ENCODE measurements at regions of chr3 and their contacts with region 1.

Region 1: GRCh38 chr3:160413613-160414248 is 14.3 kb downstream of the SMC4 start:
- DNase-seq: peak; percentile 60
- ATAC-seq: peak; percentile 89
- H3K4me3 ChIP-seq: no peak overlapping the region
- H3K27ac ChIP-seq: no peak overlapping the region
- H3K4me1 ChIP-seq: no peaks in the 10 kb centered on the region
- H3K27me3 ChIP-seq: no peaks in the 10 kb centered on the region
- CTCF ChIP-seq: peak; percentile 72 to 84 (median 80)
- POLR2A ChIP-seq: no peak
- RAD21 ChIP-seq: peak; percentile 80

Region 2: GRCh38 chr3:159266779-159267178 is 1147.0 kb before region 1 on chr3:
- CTCF ChIA-PET with region 1: no interaction called
- POLR2A ChIA-PET with region 1: no interaction called
- RAD21 ChIA-PET with region 1: no interaction called
- intact Hi-C with region 1: loop called (anchors 5 kb)
- DNase-seq: peak; percentile 26
- ATAC-seq: peak; percentile 70
- H3K4me3 ChIP-seq: no peak overlapping the region
- H3K27ac ChIP-seq: no peak overlapping the region
- H3K4me1 ChIP-seq: no peaks in the 10 kb centered on the region
- H3K27me3 ChIP-seq: 0 out of 2 replicates have a peak, but pooled peaks cover 6% of the 10 kb centered on the region
- CTCF ChIP-seq: peak; percentile 31 to 62 (median 42); a peak in 5 of 6 replicates
- POLR2A ChIP-seq: no peak
- RAD21 ChIP-seq: peak; percentile 58

Region 3: DNA sequence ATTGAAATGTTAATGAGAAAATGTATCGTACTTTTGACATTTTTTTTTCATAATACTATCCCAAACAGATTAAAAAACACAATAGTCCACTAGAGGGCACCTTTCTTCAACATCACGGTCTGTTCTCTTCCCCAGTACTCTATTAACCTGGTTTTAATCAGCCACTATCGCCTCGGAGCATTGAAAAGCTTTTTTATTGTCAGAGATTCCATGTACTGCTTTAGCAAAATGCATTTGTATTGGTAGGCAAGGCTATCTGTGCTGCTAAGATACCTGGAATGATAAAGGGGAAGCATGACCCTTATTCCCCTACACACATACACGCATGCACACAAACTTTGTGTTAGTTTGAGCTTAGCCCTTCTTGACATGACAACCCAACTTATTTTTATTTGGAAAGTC is 585.2 kb before region 1 on chr3:
- CTCF ChIA-PET with region 1: no interaction called
- POLR2A ChIA-PET with region 1: no interaction called
- RAD21 ChIA-PET with region 1: no interaction called
- intact Hi-C with region 1: loop called (anchors 5 kb)
- DNase-seq: peak; percentile 35
- ATAC-seq: peak; percentile 74
- H3K4me3 ChIP-seq: no peak overlapping the region
- H3K27ac ChIP-seq: no peak overlapping the region
- H3K4me1 ChIP-seq: peaks cover 30 to 39% of the 10 kb centered on the region in 2 experiments
- H3K27me3 ChIP-seq: no peaks in the 10 kb centered on the region
- CTCF ChIP-seq: peak; percentile 36 to 68 (median 55); a peak in 4 of 6 replicates
- POLR2A ChIP-seq: no peak
- RAD21 ChIP-seq: peak; percentile 70

Region 4: DNA sequence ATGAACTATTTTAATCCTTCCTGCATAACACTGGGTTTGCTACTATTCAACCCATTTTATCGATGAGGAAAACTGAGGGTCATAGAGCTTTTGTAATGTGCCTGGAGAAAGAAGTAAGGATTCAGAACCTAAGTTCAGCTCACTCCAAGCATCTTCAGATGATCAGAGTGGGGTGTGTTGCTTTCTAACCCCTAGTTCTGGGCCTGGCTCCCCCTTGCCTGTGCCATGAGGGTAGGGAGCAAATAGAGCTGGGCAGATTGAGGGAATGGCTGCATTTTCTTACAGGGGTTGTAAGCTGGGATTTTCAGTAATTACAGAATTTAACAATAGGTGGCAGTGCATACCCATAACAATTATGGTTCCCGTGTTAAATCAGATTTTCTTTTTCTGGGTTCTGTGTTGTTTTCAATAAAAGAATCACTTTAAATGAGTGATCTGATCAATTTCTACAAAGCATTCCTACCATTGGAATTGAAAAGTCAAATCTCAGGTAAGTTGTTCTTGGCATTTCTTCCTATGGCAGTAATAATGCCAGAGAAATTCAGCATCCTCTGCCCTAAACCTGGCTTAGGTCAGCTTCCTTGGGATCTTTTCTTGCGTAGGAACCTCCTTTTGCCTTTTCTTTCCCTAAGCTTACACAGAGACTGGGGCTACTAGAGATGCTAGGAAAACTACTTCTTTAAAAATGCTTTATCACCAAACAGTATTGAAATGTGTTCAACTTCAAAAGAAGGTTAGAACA is 528.9 kb before region 1 on chr3:
- CTCF ChIA-PET with region 1: interaction called, 4 read pairs
- POLR2A ChIA-PET with region 1: no interaction called
- RAD21 ChIA-PET with region 1: no interaction called
- intact Hi-C with region 1: loop called (anchors 10 kb)
- DNase-seq: no peak
- ATAC-seq: peak; percentile 86
- H3K4me3 ChIP-seq: no peak overlapping the region
- H3K27ac ChIP-seq: no peak overlapping the region
- H3K4me1 ChIP-seq: peaks cover 0 to 9% of the 10 kb centered on the region in 2 experiments; a peak in 2 of 4 replicates
- H3K27me3 ChIP-seq: no peaks in the 10 kb centered on the region
- CTCF ChIP-seq: peak; percentile 46 to 62 (median 59); a peak in 5 of 6 replicates
- POLR2A ChIP-seq: no peak
- RAD21 ChIP-seq: peak; percentile 73

Region 5: GRCh38 chr3:160163229-160163878 is 250.4 kb before region 1 on chr3:
- CTCF ChIA-PET with region 1: interaction called, 25 read pairs
- POLR2A ChIA-PET with region 1: no interaction called
- RAD21 ChIA-PET with region 1: no interaction called
- intact Hi-C with region 1: loop called (anchors 1 kb)
- DNase-seq: peak; percentile 23
- ATAC-seq: peak; percentile 75
- H3K4me3 ChIP-seq: no peak overlapping the region
- H3K27ac ChIP-seq: no peak overlapping the region
- H3K4me1 ChIP-seq: no peaks in the 10 kb centered on the region
- H3K27me3 ChIP-seq: no peaks in the 10 kb centered on the region
- CTCF ChIP-seq: peak; percentile 26 to 73 (median 54); a peak in 4 of 6 replicates
- POLR2A ChIP-seq: no peak
- RAD21 ChIP-seq: peak; percentile 80